ENCODE measurements at regions of chr2 and their contacts with region 1.

Region 1: DNA sequence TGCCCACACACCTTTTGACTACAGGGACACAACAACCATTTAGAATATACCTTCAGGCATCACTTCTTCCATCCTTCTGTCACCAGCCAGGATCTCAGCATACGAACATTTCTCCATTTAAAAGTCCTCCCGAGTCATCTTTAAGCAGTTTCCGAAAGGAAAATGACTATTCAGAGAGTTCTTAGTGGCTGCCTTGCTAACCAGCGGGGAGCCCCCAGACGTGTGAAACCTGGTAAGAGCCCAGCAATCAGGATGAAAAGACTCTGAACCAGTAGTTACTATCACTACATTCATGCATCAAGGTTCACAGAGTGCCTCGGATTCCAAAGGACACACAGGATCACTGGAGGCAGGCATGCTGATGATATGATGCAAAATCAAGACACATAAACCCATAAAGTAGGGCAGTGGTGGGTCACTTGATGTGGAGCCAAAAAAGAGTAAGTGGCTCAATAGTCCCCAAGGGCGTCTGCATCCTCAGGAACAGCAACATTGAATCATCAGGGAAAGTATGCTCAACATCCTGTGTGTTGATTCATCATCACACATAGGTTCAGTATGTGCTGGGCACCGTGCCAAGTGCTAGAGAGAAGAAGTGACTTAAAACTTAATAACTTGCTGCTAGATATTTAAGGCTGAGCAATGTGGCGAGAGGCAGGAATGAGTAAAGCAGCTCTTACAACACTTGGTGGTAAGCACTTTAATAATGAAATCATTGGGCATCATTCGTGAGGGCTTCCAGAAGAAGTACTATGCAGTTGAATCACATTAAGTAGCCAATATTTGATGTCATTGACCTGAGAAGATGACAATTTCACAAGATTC is 4.4 kb downstream of the CCL20 start:
- DNase-seq: peak; percentile 21
- H3K4me3 Mint-ChIP-seq: no peak overlapping the region
- H3K27ac Mint-ChIP-seq: peak overlapping the region; percentile 77
- H3K4me1 Mint-ChIP-seq: peaks cover 21% of the 10 kb centered on the region
- H3K27me3 Mint-ChIP-seq: peaks cover 5% of the 10 kb centered on the region

Region 2: GRCh38 chr2:227783404-227784138 is 34.5 kb before region 1 on chr2:
- intact Hi-C with region 1: loop called (anchors 1 kb)
- DNase-seq: no peak
- H3K4me3 Mint-ChIP-seq: peak overlapping the region; percentile 44
- H3K27ac Mint-ChIP-seq: peak overlapping the region; percentile 61
- H3K4me1 Mint-ChIP-seq: peaks cover 15% of the 10 kb centered on the region
- H3K27me3 Mint-ChIP-seq: peaks cover 2% of the 10 kb centered on the region

Region 3: DNA sequence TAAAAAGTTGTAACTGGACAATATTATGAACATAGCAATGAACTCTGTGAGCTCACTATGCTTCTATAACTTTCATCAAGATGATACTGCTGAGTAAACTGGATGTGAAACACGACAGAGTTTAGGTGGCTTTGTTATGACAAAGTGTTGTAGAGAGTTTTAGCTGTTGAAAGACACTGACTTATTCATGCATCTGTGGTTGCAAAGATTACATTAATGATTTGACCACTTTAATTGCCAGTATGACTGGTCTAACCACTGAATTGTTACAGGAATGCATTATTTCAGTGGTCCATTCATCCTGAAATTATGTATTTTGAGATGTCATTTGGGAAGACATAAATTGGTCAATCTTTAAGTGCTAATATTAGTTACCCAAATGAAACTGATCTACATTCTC is 245.5 kb after region 1 on chr2:
- intact Hi-C with region 1: no loop called
- DNase-seq: no peak
- H3K4me3 Mint-ChIP-seq: no peak overlapping the region
- H3K27ac Mint-ChIP-seq: no peak overlapping the region
- H3K4me1 Mint-ChIP-seq: no peaks in the 10 kb centered on the region
- H3K27me3 Mint-ChIP-seq: no peaks in the 10 kb centered on the region

Region 4: GRCh38 chr2:229090225-229090624 is 1272.2 kb after region 1 on chr2:
- intact Hi-C with region 1: no loop called
- DNase-seq: no peak
- H3K4me3 Mint-ChIP-seq: no peak overlapping the region
- H3K27ac Mint-ChIP-seq: no peak overlapping the region
- H3K4me1 Mint-ChIP-seq: no peaks in the 10 kb centered on the region
- H3K27me3 Mint-ChIP-seq: no peaks in the 10 kb centered on the region

Measured in activated T-helper 1 cell treated with anti-CD3 and anti-CD28 coated beads, Interleukin-12 subunit alpha, Interleukin-12 subunit beta, Interleukin-2, Interleukin-4 antibody, amounts not matched to agents 30 ng/mL and 10 ng/mL and 1 ng/mL, durations not matched to agents 14 hours and 24 hours and 36 hours (primary cell).